Activated CD4-positive, alpha-beta T cell treated with anti-CD3 and anti-CD28 coated beads, Interleukin-2, amount 10 ng/mL, durations not matched to agents 7 days and 5 days (primary cell): ENCODE measurements at regions of chr2 and their contacts with region 1.

Region 1: GRCh38 chr2:70132244-70133126 is 45.2 kb downstream of the PCBP1 start:
- DNase-seq: peak; percentile 62
- H3K4me3 Mint-ChIP-seq: peak overlapping the region; percentile 79
- H3K27ac Mint-ChIP-seq: peak overlapping the region; percentile 97
- H3K4me1 Mint-ChIP-seq: peaks cover 77% of the 10 kb centered on the region
- H3K27me3 Mint-ChIP-seq: no peaks in the 10 kb centered on the region

Region 2: GRCh38 chr2:70070541-70071268 is 61.8 kb before region 1 on chr2:
- CTCF ChIA-PET with region 1: interaction called, 10 read pairs
- POLR2A ChIA-PET with region 1: no interaction called
- DNase-seq: peak; percentile 75
- H3K4me3 Mint-ChIP-seq: peak overlapping the region; percentile 47
- H3K27ac Mint-ChIP-seq: peak overlapping the region; percentile 93
- H3K4me1 Mint-ChIP-seq: peaks cover 49% of the 10 kb centered on the region
- H3K27me3 Mint-ChIP-seq: no peaks in the 10 kb centered on the region

Region 3: GRCh38 chr2:70212298-70212974 is 80.0 kb after region 1 on chr2:
- CTCF ChIA-PET with region 1: no interaction called
- POLR2A ChIA-PET with region 1: no interaction called
- DNase-seq: no peak
- H3K4me3 Mint-ChIP-seq: no peak overlapping the region
- H3K27ac Mint-ChIP-seq: no peak overlapping the region
- H3K4me1 Mint-ChIP-seq: peaks cover 13% of the 10 kb centered on the region
- H3K27me3 Mint-ChIP-seq: no peaks in the 10 kb centered on the region